ENCODE measurements at regions of chr17 and their contacts with region 1.

Region 1: DNA sequence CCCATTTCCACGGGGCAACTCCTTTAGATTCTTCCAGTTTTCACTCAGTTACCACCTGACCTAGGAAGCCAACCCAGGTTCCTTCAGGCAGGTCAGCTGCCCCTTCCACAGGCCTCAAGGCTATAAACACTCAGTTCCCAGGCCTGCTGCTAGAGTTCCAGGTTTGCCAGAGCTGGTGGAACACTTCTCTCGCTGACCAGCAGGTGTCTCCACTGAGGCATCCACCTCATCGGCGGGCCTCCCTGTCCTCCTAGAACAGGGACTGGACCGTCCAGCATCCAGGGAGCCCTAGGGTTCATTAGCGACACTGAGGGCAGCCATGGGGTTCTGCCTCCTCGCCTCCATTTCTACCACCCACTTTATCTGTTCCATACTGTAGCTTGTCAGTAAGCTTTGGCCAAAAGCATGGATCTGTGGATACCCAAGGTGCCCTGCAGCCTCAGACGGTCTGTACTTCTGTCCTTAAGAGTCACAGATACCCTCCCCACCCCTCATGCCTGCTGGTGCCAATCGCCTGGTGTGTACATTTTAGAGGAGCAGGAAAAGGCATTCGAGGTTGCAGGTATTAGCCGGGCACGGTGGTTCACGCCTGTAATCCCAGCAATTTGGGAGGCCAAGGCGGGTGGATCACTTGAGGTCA is 29.0 kb downstream of the PIMREG start:
- DNase-seq: peak; percentile 67 to 90
- H3K4me3 ChIP-seq: no peak overlapping the region
- CTCF ChIP-seq: peak in 1 of 3 donors; percentile 57
- POLR2A ChIP-seq: no peak

Region 2: DNA sequence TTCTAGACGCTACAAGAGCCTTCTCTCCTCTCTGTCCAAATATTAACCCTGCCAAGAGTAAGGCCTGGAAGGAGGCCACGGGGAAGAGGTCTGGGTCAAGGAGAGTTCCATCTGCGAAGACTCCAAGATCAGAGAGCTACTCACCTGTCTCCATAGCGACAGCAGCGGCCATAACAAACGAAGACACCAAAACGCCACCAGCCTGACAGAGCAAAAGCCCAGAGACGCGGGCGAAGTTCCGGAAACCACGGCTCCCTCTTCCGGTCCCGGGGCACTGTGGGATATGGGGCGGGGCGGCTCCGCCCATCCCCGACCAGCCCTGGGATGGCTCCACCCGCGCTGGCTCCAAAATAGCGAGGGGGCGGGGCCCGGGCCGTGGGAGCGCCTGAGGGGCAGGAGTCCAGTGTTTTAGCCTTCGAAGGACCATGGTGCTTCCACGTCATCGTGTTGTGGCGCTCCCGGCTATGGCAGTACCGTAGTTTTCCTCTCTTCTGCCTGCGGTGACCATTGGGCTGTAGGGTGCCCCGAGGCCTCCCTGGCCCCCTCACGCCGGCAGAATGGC is 178.2 kb after region 1 on chr17 and contains the starts of genes C17orf100 and MED31:
- intact Hi-C with region 1: loop called (anchors 2 kb)
- DNase-seq: peak; percentile 93 to 99
- H3K4me3 ChIP-seq: peak within 1 kb of the TSS; percentile 68
- CTCF ChIP-seq: no peak
- POLR2A ChIP-seq: no peak
- total RNA-seq, gene C17orf100: 0.81 to 3.3 (median 1.6) TPM
- total RNA-seq, gene MED31: 2.4 to 16.5 (median 9.8) TPM